ENCODE measurements at regions of chr11 and their contacts with region 1.

Region 1: GRCh38 chr11:108713076-108713790 is 48.4 kb downstream of the DDX10 start:
- DNase-seq: peak; percentile 36
- H3K4me3 ChIP-seq: no peak overlapping the region
- H3K27ac ChIP-seq: no peak overlapping the region
- H3K4me1 ChIP-seq: no peaks in the 10 kb centered on the region; the same call in 1 of the 2 replicates
- H3K27me3 ChIP-seq: no peaks in the 10 kb centered on the region

Region 2: GRCh38 chr11:108559340-108559739 is 153.9 kb before region 1 on chr11:
- in situ Hi-C with region 1: no loop called
- DNase-seq: peak; percentile 63
- H3K4me3 ChIP-seq: peak overlapping the region; percentile 42
- H3K27ac ChIP-seq: peak overlapping the region; percentile 43; the same call in 1 of the 2 replicates
- H3K4me1 ChIP-seq: peaks cover 38% of the 10 kb centered on the region
- H3K27me3 ChIP-seq: no peaks in the 10 kb centered on the region; the same call in 1 of the 2 replicates

Region 3: DNA sequence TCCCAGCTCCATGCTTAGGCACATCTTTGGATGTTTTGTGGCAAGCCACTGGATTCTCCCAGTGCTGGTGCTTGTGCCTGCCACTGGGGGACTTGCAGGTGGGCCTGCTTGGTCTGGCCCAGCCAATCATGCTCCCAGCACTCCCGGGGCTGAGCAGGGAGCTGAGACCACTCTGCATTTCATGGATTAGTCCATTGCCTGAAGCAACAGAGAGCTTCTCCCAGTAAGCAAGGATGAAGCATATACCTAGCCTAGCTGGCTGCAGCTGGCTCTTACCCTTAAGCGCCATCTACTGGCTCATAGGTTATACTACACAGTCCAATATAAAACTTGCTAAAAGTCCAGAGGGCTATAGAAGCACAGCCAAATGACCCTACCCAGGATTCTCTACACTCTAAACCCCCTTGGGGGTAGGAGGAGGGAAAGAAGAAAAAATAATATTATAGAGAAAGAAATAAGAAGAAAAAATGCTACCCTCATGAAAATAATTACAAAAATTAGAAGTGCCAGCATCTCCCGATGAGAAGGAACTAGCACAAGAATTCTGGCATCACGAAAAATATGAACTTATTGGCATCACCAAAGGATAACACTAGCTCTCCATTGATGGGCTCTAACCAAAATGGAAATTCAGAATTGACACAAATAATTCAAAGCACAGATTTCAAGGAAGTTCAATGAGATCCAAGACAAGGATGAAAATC is 984.1 kb after region 1 on chr11:
- in situ Hi-C with region 1: loop called (anchors 25 kb)
- DNase-seq: peak; percentile 76
- H3K4me3 ChIP-seq: no peak overlapping the region
- H3K27ac ChIP-seq: peak overlapping the region; percentile 76; the same call in 1 of the 2 replicates
- H3K4me1 ChIP-seq: peaks cover 3% of the 10 kb centered on the region; the same call in 1 of the 2 replicates
- H3K27me3 ChIP-seq: no peaks in the 10 kb centered on the region

Region 4: DNA sequence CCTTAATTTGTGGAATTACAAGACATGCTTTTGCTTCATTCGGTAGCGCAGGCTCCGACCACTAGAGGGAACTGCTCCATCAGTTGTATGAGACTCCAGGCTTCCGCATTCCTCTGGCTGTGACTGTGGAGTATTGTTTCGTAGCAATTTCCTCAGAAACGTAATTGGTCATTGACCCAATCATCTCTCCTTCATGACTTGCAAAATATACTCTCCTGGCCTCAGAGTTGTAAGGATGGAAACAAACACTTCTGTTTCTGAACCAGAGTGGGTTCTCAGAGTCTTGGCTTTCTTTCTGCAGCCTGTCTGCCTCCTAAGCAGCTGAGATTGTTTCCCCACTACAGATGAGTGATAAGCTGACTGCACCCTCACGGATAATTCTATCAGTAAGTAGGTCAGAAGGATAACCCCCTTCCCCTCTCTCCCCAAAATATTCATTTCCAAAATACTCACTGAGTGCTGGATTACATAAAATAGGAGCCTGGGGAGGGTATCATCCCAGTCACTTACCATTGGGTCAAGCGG is 1233.2 kb after region 1 on chr11:
- in situ Hi-C with region 1: loop called (anchors 25 kb)
- DNase-seq: peak; percentile 97
- H3K4me3 ChIP-seq: peak overlapping the region; percentile 54
- H3K27ac ChIP-seq: peak overlapping the region; percentile 86
- H3K4me1 ChIP-seq: peaks cover 5% of the 10 kb centered on the region
- H3K27me3 ChIP-seq: no peaks in the 10 kb centered on the region